Activated naive CD8-positive, alpha-beta T cell treated with anti-CD3 and anti-CD28 coated beads, Interleukin-2, amount 10 ng/mL, durations not matched to agents 7 days and 5 days (primary cell): ENCODE measurements at regions of chr11 and their contacts with region 1.

Region 1: GRCh38 chr11:73971175-73971719 is 11.4 kb downstream of the UCP2 start:
- DNase-seq: no peak
- ATAC-seq: no peak
- H3K4me3 Mint-ChIP-seq: no peak overlapping the region
- H3K27ac Mint-ChIP-seq: peak overlapping the region; percentile 51
- H3K4me1 Mint-ChIP-seq: peaks cover 46% of the 10 kb centered on the region
- H3K27me3 Mint-ChIP-seq: no peaks in the 10 kb centered on the region

Region 2: GRCh38 chr11:73995247-73995646 is 24.0 kb after region 1 on chr11:
- POLR2A ChIA-PET with region 1: interaction called, 36 read pairs
- DNase-seq: peak; percentile 1
- ATAC-seq: peak; percentile 82
- H3K4me3 Mint-ChIP-seq: peak overlapping the region; percentile 86
- H3K27ac Mint-ChIP-seq: peak overlapping the region; percentile 95
- H3K4me1 Mint-ChIP-seq: peaks cover 37% of the 10 kb centered on the region
- H3K27me3 Mint-ChIP-seq: no peaks in the 10 kb centered on the region

Region 3: DNA sequence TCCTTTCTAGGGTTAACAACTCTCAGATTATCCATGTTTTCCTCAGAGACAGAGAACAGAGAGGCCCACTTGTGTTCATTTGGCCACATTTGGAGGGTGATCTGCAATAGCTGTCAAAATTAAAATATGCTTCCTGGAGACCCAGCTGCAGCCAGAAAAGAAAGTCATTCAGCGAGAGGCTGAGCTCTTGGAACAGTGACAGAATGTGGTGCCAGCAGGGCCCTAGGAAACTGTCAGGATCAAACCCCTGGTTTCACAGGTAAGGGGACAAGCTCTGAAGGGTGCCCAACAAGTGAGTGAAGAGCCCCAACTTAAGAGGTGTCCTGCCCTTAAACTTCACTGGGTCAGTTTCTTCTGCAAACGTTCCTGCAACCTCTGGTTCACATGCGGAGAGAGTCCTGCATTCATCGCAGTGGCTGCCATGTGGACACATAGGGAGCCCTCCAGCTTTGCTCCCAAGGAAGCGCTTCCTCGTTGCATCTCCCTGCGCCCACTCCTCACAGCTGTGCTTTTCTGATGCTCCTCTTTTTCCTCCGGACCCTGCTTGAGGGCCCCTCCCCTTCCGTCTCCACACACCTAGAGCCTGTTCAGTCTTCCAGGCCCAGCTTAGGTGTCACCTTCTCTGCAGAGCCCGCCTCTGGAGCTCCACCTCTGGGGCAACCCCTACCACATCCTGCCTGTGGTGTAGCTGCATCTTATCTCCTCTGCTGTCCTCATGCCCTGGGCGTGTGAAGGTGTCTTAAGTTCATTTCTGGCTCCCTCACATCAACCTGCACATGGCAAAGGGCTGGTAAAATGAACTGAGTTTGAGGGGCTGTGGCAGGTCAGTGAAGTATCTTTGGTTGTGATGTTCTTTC is 33.7 kb after region 1 on chr11:
- POLR2A ChIA-PET with region 1: interaction called, 17 read pairs
- DNase-seq: peak; percentile 79
- ATAC-seq: peak; percentile 99
- H3K4me3 Mint-ChIP-seq: peak overlapping the region; percentile 77
- H3K27ac Mint-ChIP-seq: peak overlapping the region; percentile 96
- H3K4me1 Mint-ChIP-seq: peaks cover 36% of the 10 kb centered on the region
- H3K27me3 Mint-ChIP-seq: no peaks in the 10 kb centered on the region

Region 4: DNA sequence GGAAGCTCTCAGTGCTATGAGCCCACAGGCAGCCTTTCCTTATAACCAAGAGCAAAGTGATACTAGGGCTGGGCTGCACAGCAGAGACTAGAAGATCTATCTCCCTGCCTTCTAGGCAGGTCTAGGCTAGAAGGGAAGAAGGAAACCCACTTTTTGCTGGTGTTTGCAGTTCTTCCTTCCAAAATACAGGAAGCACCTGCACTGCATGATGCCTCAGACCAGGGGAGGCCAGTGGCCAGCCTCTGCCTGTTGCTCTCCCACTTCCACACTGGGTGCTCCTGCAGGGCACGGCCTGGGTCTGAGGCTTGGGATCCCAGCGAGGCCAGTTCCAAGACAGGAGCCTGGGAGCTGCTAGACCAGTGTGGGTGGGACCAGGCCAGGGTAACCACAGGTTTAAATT is 43.6 kb after region 1 on chr11:
- POLR2A ChIA-PET with region 1: interaction called, 11 read pairs
- DNase-seq: no peak
- ATAC-seq: no peak
- H3K4me3 Mint-ChIP-seq: no peak overlapping the region
- H3K27ac Mint-ChIP-seq: no peak overlapping the region
- H3K4me1 Mint-ChIP-seq: peaks cover 42% of the 10 kb centered on the region
- H3K27me3 Mint-ChIP-seq: no peaks in the 10 kb centered on the region